ENCODE measurements at regions of chr18 and their contacts with region 1.

Region 1: DNA sequence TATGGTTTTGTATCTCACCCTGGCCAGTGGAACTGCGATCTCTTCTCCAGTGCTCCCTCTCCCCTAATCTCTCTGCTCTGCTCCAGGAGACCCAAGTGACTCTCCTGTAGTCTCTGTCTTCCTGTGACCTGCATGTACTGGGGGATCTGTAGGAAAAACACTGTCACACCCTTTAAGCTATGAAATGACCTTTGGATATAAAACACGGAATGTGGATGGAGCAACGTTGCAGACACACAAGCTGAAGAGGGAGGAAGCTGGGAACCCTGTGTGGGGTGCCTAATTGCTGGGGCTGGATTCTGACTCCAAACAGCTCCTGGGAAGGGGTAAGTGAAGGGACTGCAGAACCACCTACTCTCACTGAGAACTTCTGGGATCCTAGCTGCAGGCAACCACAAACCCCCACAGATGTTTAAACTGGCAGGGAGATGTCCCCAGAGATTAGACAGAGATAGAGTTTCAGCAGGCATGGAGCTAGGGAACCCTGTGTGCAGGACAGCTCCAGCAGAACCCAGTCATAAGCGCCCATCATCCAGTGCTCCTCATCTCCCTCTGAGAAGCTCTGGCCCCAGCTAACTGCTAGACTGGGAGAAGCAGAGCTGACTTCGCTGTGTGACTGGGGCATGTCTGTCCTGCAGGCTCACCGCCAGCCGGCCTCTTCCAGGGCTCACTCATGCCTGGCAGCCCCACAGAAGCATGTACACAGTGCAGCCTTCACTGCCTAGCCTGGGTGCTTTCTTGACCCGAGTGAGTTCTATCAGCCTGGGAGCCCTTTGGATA is 482.7 kb upstream of the SETBP1 start:
- DNase-seq: no peak
- ATAC-seq: no peak
- H3K4me3 ChIP-seq: no peak overlapping the region
- H3K27ac ChIP-seq: no peak overlapping the region
- H3K4me1 ChIP-seq: no peaks in the 10 kb centered on the region
- H3K27me3 ChIP-seq: no peaks in the 10 kb centered on the region
- CTCF ChIP-seq: no peak
- POLR2A ChIP-seq: no peak
- RAD21 ChIP-seq: no peak

Region 2: GRCh38 chr18:43789234-43790000 is 408.6 kb before region 1 on chr18:
- CTCF ChIA-PET with region 1: no interaction called
- POLR2A ChIA-PET with region 1: no interaction called
- dilution Hi-C with region 1: no loop called
- in situ Hi-C with region 1: no loop called
- intact Hi-C with region 1: loop called (anchors 10 kb)
- DNase-seq: no peak
- ATAC-seq: peak; percentile 60
- H3K4me3 ChIP-seq: no peak overlapping the region
- H3K27ac ChIP-seq: no peak overlapping the region
- H3K4me1 ChIP-seq: no peaks in the 10 kb centered on the region
- H3K27me3 ChIP-seq: no peaks in the 10 kb centered on the region; the same call in 1 of the 2 replicates
- CTCF ChIP-seq: no peak
- POLR2A ChIP-seq: no peak
- RAD21 ChIP-seq: no peak

Measured in IMR-90 (cell line).